PC-9 (cell line): ENCODE measurements at regions of chr12 and their contacts with region 1.

Region 1: DNA sequence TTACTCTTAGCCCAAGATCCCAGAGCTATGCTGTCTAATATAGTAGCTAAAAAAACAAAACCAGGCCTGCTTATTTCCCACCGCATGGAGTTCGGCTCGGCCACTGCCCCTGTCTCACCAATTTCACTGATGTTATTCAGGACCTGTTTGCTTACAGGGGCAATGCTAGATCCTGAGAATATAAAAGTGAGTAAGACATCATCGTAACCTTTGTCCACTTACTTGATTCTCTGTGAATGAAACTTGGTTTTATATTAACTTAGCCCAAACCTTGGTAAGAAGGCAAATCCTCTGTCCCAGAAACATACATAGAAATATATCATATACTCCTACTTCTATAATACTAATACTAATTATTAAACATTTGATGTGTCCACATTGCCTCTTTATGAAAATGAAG is 56.6 kb downstream of the RNFT2 start:
- DNase-seq: no peak
- H3K4me3 ChIP-seq: no peak overlapping the region
- H3K27ac ChIP-seq: no peak overlapping the region
- H3K4me1 ChIP-seq: no peaks in the 10 kb centered on the region
- H3K27me3 ChIP-seq: no peaks in the 10 kb centered on the region
- CTCF ChIP-seq: no peak

Region 2: DNA sequence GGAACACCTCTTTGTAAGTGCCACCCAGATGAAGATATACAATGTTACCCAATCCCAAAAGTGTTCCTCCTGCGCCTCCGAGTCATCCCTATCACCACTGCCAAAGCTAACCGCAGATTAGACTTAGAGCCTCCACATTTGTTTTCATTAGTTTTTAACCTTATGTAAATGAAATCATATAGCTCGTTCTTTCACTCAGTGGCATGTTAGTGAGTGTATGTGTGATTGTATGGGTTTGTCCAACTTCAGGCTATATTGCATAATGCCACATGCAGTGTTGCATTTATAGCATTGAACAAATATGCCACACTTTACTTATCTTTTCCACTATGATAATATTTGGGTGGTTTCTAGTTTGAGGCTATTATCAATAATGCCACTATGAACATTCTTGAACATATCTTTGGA is 217.6 kb before region 1 on chr12:
- CTCF ChIA-PET with region 1: no interaction called
- POLR2A ChIA-PET with region 1: no interaction called
- intact Hi-C with region 1: no loop called
- DNase-seq: no peak
- H3K4me3 ChIP-seq: no peak overlapping the region
- H3K27ac ChIP-seq: no peak overlapping the region
- H3K4me1 ChIP-seq: no peaks in the 10 kb centered on the region
- H3K27me3 ChIP-seq: no peaks in the 10 kb centered on the region
- CTCF ChIP-seq: no peak

Region 3: DNA sequence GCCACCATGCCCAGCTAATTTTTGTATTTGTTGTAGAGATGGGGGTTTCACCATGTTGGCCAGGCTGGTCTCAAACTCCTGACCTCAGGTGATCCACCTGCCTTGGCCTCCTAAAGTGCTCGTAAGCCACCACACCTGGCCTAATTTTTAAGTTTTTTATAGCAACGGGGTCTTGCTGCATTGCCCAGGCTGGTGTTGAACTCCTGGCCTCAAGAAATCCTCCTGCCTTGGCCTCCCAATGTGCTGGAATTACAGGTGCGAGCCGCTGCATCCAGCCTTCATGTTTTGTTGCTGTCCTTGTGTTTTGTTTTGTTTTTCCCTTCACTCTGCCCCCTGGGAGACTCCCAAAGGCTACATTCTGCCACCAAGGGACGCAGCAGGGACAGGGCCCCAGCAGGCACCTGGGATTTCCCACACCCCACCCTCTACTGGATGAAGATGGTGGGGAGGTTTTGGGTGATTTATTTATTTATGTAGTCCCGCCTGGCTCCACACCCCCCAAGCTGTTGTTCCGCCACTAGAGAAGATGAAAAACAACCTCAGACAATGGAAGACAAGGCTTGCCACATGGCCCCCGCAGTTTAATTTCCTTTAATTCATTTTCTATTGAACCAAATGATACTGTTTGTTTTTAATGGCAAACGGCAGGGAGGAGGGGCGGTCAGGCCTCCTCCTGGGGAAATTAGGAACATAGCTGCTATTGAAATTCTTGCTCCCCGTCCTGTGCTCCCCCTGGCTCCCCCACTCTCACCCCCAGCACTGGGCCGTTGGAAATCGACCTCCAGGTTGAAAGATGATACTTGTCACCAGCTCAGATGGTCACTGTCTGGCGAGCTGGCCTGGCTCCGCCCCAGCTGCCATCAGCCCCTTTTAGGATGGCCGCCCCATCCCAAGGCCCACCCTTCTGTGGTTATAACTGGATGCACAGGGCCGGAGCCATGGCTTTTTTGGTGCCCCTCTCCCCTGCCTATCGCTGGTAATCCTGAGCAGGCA is 13.7 kb after region 1 on chr12:
- CTCF ChIA-PET with region 1: no interaction called
- POLR2A ChIA-PET with region 1: interaction called, 15 read pairs
- intact Hi-C with region 1: no loop called
- DNase-seq: no peak
- H3K4me3 ChIP-seq: no peak overlapping the region
- H3K27ac ChIP-seq: no peak overlapping the region
- H3K4me1 ChIP-seq: peaks cover 13% of the 10 kb centered on the region
- H3K27me3 ChIP-seq: no peaks in the 10 kb centered on the region
- CTCF ChIP-seq: no peak